OCI-LY7 (cell line): ENCODE measurements at regions of chr7 and their contacts with region 1.

Region 1: DNA sequence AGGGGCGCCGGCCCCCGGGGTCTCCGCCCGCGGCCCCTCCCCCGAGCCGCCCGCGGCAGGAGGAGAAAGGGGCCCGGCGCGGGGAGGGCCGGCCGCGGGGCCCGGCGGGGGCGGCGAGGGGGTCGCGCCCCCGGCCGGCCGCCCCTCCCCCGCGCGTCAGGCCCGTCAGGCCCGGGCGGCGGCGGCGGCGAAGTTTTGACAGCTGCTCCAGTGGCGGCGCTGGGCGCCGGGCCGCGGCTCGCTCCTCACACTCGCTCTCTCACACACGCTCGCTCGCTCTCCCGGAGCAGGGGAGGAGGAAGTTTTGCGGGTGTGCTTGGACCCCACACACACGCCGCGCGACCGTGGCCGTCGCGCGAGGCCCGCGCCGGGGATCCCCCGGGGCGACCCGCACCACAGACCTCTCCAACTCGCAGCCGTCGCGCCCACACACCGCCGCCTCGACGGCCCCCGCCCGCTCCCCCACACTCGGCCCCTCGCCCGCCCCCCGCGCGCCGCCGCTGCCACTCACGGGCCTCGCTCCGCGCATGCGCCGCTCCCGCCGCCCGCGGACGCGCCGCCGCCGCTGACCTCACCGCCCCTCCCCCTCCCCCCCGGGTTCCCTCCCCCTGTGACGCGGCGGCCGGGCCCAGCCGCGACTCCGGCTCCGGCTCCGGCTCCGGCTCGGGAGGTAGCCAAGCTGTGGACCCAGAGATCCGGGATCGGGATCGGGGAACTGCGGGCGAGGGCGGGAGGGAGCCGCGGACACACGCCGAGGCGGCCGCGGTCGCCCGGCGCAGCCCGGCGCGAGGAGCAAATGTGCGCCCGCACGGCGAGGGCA is 518 bp upstream of the KMT2C start:
- DNase-seq: peak; percentile 91
- H3K4me3 ChIP-seq: peak overlapping the region; percentile 84
- H3K27ac ChIP-seq: peak overlapping the region; percentile 81
- H3K4me1 ChIP-seq: peaks cover 23% of the 10 kb centered on the region
- CTCF ChIP-seq: no peak

Region 2: DNA sequence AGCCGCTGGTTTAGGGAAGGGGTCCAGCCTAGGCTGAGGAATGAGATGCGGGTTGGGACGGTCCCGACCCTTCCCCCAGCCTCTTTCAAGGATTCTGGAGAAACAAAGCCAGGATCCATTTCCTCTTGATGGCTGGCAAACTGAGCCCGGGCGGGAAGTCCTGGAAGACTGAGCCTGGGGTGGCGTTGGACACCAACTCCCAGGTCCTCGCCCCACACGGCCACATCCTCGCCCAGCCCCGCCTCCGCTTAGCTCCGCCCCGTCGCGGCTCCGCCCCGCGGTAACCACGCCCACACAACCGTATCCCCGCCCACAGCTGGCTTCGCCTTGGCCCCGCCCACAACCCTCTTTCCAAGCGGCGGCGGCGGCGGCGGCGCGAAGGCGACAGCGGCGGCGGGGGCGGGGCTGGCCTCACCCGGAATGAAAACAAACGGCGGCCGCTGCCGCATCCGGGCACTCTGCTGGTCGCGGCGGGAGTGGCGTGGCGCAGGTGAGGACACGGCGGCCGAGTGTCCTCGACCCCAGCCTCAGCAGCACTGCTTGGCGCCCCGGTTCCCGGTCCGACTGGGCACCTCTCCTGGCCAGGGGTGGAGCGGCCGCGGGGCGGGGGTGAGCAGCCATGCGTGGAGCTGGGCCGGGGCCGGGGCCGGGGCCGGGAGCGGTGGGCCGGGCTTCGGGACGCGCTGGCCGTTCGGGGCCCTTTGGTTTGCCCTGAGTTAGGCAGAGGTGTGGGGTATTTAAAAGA is 1094.8 kb before region 1 on chr7 and contains the start of gene NUB1:
- CTCF ChIA-PET with region 1: no interaction called
- POLR2A ChIA-PET with region 1: no interaction called
- intact Hi-C with region 1: loop called (anchors 10 kb)
- DNase-seq: peak; percentile 91
- H3K4me3 ChIP-seq: peak within 1 kb of the TSS; percentile 84
- H3K27ac ChIP-seq: peak within 1 kb of the TSS; percentile 60
- H3K4me1 ChIP-seq: peaks cover 27% of the 10 kb centered on the region
- CTCF ChIP-seq: no peak
- total RNA-seq, gene NUB1: 44.1 and 44.2 TPM in 2 replicates

Region 3: DNA sequence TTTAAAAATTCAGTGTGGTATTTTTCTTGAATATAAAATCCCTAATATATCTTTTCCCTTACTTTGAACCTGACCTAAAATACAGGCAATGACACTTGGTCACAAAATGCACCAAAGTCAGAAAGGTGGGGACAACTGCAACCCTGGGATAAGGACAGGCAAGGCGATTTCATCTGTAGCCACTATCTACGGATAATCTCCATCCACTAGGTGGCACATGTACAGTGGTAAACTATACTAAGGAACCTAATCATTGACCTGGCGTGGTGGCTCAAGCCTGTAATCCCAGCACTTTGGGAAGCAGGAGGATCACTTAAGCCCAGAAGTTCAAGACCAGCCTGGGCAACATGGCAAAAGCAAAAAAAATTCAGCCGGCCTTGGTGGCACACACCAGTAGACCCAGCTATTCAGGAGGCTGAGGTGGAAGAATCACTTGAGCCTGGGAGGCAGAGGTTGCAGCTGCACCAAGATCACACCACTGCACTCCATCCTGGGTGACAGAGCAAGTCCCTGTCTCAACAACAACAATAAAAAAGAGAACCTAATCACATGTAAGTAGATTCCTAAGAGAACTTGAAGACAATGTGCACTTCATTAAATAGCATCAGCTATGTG is 99.5 kb before region 1 on chr7:
- CTCF ChIA-PET with region 1: no interaction called
- POLR2A ChIA-PET with region 1: interaction called, 8 read pairs
- intact Hi-C with region 1: loop called (anchors 2 kb)
- DNase-seq: peak; percentile 70
- H3K4me3 ChIP-seq: no peak overlapping the region
- H3K27ac ChIP-seq: peak overlapping the region; percentile 51
- H3K4me1 ChIP-seq: peaks cover 81% of the 10 kb centered on the region
- CTCF ChIP-seq: peak; percentile 91

Region 4: GRCh38 chr7:152675759-152676636 is 239.7 kb after region 1 on chr7 and contains the start of gene XRCC2:
- CTCF ChIA-PET with region 1: no interaction called
- POLR2A ChIA-PET with region 1: interaction called, 3 read pairs
- intact Hi-C with region 1: loop called (anchors 10 kb)
- DNase-seq: peak; percentile 93
- H3K4me3 ChIP-seq: peak within 1 kb of the TSS; percentile 80
- H3K27ac ChIP-seq: peak within 1 kb of the TSS; percentile 68
- H3K4me1 ChIP-seq: peaks cover 15% of the 10 kb centered on the region
- CTCF ChIP-seq: no peak
- total RNA-seq, gene XRCC2: 39.7 and 40.0 TPM in 2 replicates

Region 5: GRCh38 chr7:153258686-153259085 is 822.4 kb after region 1 on chr7:
- CTCF ChIA-PET with region 1: no interaction called
- POLR2A ChIA-PET with region 1: no interaction called
- intact Hi-C with region 1: no loop called
- DNase-seq: no peak
- H3K4me3 ChIP-seq: no peak overlapping the region
- H3K27ac ChIP-seq: no peak overlapping the region
- H3K4me1 ChIP-seq: no peaks in the 10 kb centered on the region
- CTCF ChIP-seq: no peak